RWPE1 (cell line): ENCODE measurements at regions of chr19 and their contacts with region 1.

Region 1: GRCh38 chr19:39671738-39672363 is 16.1 kb downstream of the LGALS16 start:
- DNase-seq: peak; percentile 27
- H3K27ac ChIP-seq: no peak overlapping the region
- CTCF ChIP-seq: peak; percentile 54

Region 2: GRCh38 chr19:39546599-39546998 is 125.3 kb before region 1 on chr19:
- CTCF ChIA-PET with region 1: interaction called, 12 read pairs
- POLR2A ChIA-PET with region 1: no interaction called
- DNase-seq: no peak
- H3K27ac ChIP-seq: no peak overlapping the region
- CTCF ChIP-seq: no peak

Region 3: GRCh38 chr19:39599116-39599515 is 72.7 kb before region 1 on chr19:
- CTCF ChIA-PET with region 1: no interaction called
- POLR2A ChIA-PET with region 1: no interaction called
- DNase-seq: peak; percentile 16
- H3K27ac ChIP-seq: no peak overlapping the region
- CTCF ChIP-seq: no peak